BJ (cell line): ENCODE measurements at regions of chr22 and their contacts with region 1.

Region 1: DNA sequence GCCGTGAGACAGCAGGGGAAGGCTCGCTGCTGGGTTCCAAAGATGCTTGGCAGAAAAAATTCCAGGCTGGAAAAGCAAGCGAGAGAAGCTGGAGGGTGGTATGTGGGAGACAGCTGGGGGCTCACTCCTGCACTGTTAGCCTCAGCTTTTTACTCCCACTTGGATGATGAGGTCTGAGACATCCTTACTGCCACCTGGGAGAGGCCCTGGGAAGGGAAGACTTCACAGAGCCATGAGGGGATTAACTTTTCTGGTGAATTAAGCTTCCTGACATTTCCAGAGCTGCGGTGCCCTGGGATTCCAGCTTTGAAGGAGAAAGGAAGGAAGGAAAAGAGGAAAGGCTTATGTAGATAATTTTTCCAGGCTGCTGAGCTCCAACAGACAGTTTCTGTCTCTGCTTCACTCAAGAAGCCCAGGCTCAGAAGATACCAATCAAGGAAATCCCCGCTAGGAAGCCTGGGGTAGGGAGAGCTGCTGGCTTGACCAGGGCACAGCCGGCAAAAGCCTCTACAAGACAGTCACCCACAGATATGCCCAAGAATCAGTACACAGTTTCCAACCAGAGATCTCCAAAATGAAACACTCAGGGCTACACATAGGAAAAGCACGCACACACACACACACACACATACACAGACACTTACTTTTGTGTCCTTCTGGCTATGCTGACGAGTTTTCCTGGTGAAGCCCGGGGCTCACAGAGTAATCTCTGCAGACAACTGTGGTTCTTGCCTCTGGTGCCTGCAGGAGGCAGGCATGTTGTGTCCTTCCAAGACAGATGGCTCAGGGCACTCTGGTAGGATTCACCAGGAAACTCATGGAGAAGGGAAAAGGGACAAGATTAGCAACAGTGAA is 907 bp downstream of the MCHR1 start:
- DNase-seq: no peak
- H3K4me3 ChIP-seq: no peak overlapping the region; the same call in 1 of the 2 replicates
- H3K27me3 ChIP-seq: 0 out of 2 replicates have a peak, but pooled peaks cover 3% of the 10 kb centered on the region
- CTCF ChIP-seq: peak; percentile 25

Region 2: GRCh38 chr22:40210818-40211217 is 469.4 kb before region 1 on chr22:
- CTCF ChIA-PET with region 1: no interaction called
- POLR2A ChIA-PET with region 1: no interaction called
- DNase-seq: no peak
- H3K4me3 ChIP-seq: no peak overlapping the region
- H3K27me3 ChIP-seq: no peaks in the 10 kb centered on the region
- CTCF ChIP-seq: no peak

Region 3: DNA sequence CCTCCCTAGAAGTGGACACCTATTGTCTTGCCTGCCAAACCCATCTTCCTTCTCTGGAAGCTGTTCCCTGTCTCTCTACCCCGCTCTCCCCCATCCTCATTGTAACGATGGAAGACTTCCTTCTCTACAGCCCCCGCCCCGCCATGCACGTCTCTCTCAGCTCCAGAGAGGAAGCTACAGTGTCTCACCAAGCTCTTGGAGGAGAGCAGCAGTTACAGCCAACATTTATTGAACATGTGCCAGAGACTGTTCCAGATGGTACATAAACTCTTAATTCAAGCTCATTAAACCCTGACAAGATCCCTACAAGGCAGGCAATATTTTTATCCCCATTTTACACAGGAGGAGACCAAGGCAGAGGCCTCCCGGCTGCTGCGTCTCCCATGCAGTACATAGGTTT is 14.2 kb after region 1 on chr22:
- CTCF ChIA-PET with region 1: interaction called, 24 read pairs
- POLR2A ChIA-PET with region 1: interaction called, 7 read pairs
- DNase-seq: no peak
- H3K4me3 ChIP-seq: no peak overlapping the region
- H3K27me3 ChIP-seq: no peaks in the 10 kb centered on the region
- CTCF ChIP-seq: no peak

Region 4: DNA sequence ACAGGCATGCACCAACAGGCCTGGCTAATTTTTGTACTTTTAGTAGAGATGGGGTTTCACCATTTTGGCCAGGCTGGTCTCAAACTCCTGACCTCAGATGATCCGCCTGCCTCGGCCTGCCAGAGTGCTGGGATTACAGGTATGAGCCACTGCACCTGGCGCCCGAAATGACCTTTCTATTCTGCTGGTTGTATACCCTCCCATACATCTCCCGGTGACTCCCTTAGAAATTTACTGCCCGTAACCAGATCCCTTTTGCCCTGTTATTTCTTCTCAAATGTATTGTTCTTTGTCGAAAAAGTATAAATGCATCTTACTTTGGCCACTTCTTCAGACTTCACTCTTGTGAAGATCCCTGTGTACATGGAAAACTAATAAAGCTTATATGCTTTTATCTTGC is 21.1 kb after region 1 on chr22:
- CTCF ChIA-PET with region 1: interaction called, 10 read pairs
- POLR2A ChIA-PET with region 1: no interaction called
- DNase-seq: no peak
- H3K4me3 ChIP-seq: no peak overlapping the region
- H3K27me3 ChIP-seq: no peaks in the 10 kb centered on the region
- CTCF ChIP-seq: no peak

Region 5: GRCh38 chr22:40757071-40757470 is 76.9 kb after region 1 on chr22:
- CTCF ChIA-PET with region 1: interaction called, 64 read pairs
- POLR2A ChIA-PET with region 1: no interaction called
- DNase-seq: no peak
- H3K4me3 ChIP-seq: no peak overlapping the region
- H3K27me3 ChIP-seq: no peaks in the 10 kb centered on the region
- CTCF ChIP-seq: no peak

Region 6: DNA sequence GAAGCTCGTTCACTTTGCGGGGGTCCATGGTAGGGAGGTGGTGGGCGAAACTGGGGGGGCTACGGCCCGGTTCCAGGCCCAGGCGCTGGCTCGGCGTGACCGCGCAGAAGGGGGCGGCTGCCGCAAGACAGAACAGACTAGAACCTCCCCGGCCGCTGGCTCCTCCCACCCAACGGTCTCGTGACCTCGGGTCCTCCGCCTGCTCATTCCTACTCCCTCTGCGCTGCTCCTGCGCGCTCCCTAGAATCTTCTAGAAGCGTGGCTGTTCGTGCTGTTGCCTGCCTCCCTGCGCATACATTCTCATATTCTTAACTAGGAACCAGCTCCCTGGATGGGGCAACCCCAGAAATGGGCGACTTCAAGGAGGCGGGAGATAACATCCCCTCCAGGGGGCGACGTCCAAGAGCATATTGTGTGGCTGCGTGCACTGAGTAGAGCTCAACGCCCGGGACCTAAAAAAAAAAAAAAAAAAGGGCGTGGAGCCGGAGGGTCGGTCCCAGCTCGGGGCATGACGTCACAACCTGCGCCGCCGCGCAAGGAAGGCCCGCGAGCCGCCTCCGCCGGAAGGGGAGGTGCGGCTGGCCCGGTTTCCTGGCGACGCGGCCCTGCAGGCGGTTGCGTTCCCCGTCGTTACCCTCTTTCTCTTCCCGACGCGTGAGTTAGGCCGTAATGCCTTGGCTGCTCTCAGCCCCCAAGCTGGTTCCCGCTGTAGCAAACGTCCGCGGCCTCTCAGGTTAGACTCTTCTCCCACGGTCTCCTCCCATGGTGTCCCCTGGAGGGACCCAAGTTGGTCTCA is 176.5 kb after region 1 on chr22 and contains the starts of genes ST13 and XPNPEP3:
- CTCF ChIA-PET with region 1: interaction called, 10 read pairs
- POLR2A ChIA-PET with region 1: no interaction called
- DNase-seq: peak; percentile 81
- H3K4me3 ChIP-seq: peak within 1 kb of the TSS; percentile 99
- H3K27me3 ChIP-seq: no peaks in the 10 kb centered on the region
- CTCF ChIP-seq: 0 out of 2 replicates have a peak, but pooled peaks have one; percentile 20
- polyA plus RNA-seq, gene ST13: 90.7 and 145 TPM in 2 replicates
- polyA plus RNA-seq, gene XPNPEP3: 21.9 and 25.8 TPM in 2 replicates